ENCODE measurements at regions of chr5 and their contacts with region 1.

Region 1: GRCh38 chr5:43019614-43020293 is 20.4 kb downstream of the ANXA2R start:
- DNase-seq: peak; percentile 69 to 96 (median 84)
- ATAC-seq: peak; percentile 66
- H3K4me3 ChIP-seq: peak overlapping the region; percentile 70 to 73
- H3K4me3 Mint-ChIP-seq: peak overlapping the region; percentile 98
- H3K27ac ChIP-seq: peak overlapping the region; percentile 97 to 98
- H3K27ac Mint-ChIP-seq: peak overlapping the region; percentile 100
- H3K4me1 ChIP-seq: peaks cover 40% of the 10 kb centered on the region
- H3K4me1 Mint-ChIP-seq: peaks cover 43% of the 10 kb centered on the region
- H3K27me3 ChIP-seq: no peaks in the 10 kb centered on the region
- H3K27me3 Mint-ChIP-seq: no peaks in the 10 kb centered on the region
- CTCF ChIP-seq: peak; percentile 71

Region 2: GRCh38 chr5:42930934-42931333 is 88.8 kb before region 1 on chr5:
- CTCF ChIA-PET with region 1: no interaction called
- POLR2A ChIA-PET with region 1: no interaction called
- intact Hi-C with region 1: no loop called
- DNase-seq: no peak
- ATAC-seq: no peak
- H3K4me3 ChIP-seq: no peak overlapping the region
- H3K4me3 Mint-ChIP-seq: no peak overlapping the region
- H3K27ac ChIP-seq: no peak overlapping the region
- H3K27ac Mint-ChIP-seq: no peak overlapping the region
- H3K4me1 ChIP-seq: no peaks in the 10 kb centered on the region
- H3K4me1 Mint-ChIP-seq: no peaks in the 10 kb centered on the region
- H3K27me3 ChIP-seq: no peaks in the 10 kb centered on the region
- H3K27me3 Mint-ChIP-seq: no peaks in the 10 kb centered on the region
- CTCF ChIP-seq: no peak

Region 3: DNA sequence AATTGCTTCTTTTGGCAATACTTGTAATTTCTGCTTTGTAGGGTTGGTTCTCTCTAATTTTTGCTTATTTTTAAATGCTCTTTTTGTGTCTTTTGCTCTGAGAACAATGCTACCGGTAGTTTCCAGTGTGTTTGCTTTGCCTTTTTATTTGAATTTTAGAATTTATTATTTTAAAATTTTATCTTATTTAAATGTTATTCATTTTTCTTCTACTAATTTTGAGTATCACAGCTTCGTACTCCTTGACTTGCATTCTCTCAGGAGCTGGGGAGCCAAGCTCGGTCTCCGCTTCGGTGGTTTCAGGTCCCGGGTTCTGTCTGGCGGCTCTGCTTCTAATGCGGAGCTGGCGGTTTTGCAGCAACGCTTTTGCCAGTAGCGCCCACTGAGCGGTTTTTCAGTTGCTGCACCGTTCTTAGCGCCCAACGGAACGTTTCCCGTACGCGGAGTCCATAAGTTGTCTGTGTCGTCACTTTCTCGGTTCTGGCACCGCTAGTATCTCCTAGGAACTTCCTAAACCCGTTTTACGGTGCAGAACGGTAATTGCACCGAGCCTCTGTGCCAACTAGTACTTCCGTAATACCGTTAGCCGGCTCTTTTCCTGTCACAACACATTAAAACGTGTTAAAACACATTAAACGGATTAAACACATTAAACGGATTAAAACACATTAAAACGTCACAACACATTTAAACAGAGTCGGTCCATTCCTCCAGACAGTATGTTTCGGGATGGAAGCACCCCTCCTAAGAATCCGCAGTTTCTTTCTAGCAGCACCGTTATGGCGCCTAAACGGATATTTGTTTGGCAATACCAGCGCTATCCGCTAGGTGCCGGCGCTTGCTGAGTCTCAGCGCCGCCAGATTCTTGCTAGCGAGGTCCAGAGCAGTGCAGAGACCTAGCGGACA is 25.3 kb before region 1 on chr5:
- CTCF ChIA-PET with region 1: interaction called, 114 read pairs
- POLR2A ChIA-PET with region 1: interaction called, 565 read pairs
- intact Hi-C with region 1: loop called (anchors 1 kb)
- DNase-seq: peak; percentile 75 to 94 (median 88)
- ATAC-seq: peak; percentile 63
- H3K4me3 ChIP-seq: peak overlapping the region; percentile 78 to 92
- H3K4me3 Mint-ChIP-seq: peak overlapping the region; percentile 99
- H3K27ac ChIP-seq: peak overlapping the region; percentile 97
- H3K27ac Mint-ChIP-seq: peak overlapping the region; percentile 100
- H3K4me1 ChIP-seq: peaks cover 23% of the 10 kb centered on the region
- H3K4me1 Mint-ChIP-seq: peaks cover 41% of the 10 kb centered on the region
- H3K27me3 ChIP-seq: no peaks in the 10 kb centered on the region
- H3K27me3 Mint-ChIP-seq: no peaks in the 10 kb centered on the region
- CTCF ChIP-seq: peak; percentile 93

Region 4: GRCh38 chr5:43034591-43034968 is 14.8 kb after region 1 on chr5:
- CTCF ChIA-PET with region 1: interaction called, 84 read pairs
- POLR2A ChIA-PET with region 1: interaction called, 583 read pairs
- intact Hi-C with region 1: loop called (anchors 1 kb)
- DNase-seq: peak in 4 of 9 experiments; percentile 38 to 65 (median 42)
- ATAC-seq: no peak
- H3K4me3 ChIP-seq: peak overlapping the region in 1 of 2 experiments; percentile 24
- H3K4me3 Mint-ChIP-seq: peak overlapping the region; percentile 58
- H3K27ac ChIP-seq: no peak overlapping the region
- H3K27ac Mint-ChIP-seq: peak overlapping the region; percentile 82
- H3K4me1 ChIP-seq: peaks cover 33% of the 10 kb centered on the region
- H3K4me1 Mint-ChIP-seq: peaks cover 50% of the 10 kb centered on the region
- H3K27me3 ChIP-seq: no peaks in the 10 kb centered on the region
- H3K27me3 Mint-ChIP-seq: no peaks in the 10 kb centered on the region
- CTCF ChIP-seq: no peak

Measured in CD8-positive, alpha-beta T cell (primary cell).